ENCODE measurements at regions of chr2 and their contacts with region 1.

Region 1: DNA sequence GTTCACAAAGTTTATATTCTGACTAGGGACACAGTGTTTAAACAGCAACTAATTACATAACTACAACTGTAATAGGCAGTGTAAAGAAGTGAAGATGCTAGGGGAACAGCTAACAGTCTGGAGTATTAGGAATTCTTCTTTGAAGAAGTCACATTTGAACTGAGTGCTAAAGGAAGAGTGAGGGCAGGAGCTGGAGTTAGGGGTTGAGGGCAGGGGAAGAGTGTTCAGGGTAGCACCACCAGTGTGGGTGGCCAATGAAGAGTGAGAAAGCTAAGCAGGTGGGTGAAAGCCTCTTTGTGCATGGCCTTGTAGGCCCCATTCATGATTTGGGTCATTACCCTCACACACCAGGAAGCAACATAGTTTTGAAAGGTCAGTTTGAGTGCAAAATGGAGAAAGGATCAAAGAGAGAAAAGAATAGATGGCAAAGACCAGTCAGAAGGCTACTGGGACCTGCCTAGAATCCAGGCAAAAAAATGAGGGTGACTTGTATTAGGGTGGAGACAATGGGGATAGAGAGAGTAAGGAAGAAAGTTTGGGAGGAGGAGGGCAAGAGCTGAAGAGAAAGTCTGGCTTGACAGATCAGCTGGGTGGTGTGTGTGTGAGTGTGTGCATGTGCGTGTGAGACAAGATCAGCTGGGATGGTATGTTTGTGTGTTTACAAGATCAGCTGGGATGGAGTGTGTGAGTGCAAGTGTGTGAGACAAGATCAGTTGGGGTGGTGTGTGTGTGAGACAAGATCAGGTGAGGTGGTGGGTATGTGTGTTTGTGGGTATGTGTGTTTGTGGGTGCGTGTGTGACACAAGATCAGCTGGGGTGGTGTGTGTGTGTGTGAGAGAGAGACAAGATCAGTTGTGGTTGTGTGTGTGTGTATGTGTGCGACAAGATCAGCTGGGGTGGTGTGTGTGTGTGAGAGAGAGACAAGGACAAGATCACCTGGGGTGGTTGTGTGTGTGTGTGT is 43.6 kb upstream of the AGPS start:
- DNase-seq: no peak
- H3K4me3 ChIP-seq: no peak overlapping the region
- H3K27ac ChIP-seq: no peak overlapping the region
- H3K4me1 ChIP-seq: peaks cover 0 to 15% of the 10 kb centered on the region in 2 donors
- H3K27me3 ChIP-seq: no peaks in the 10 kb centered on the region
- CTCF ChIP-seq: no peak
- POLR2A ChIP-seq: no peak

Region 2: DNA sequence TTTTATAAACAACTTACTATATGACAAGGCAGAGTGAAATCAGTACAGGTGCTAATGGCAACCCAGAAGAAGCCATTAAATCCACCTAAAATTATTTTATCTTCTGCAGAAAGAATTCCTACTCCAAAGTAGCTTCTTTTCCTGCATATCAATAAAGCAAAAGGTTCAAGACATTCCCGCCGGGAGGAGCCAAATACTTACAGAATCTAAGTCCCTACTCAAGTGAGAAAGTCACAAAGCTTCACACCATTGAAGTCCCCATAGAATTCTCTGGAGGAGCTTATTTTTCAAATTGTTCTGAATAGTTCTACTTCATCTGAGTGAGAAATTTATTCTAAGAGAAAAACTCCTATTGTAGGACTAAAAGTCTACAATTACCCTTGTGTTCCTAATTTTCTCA is 370.1 kb before region 1 on chr2:
- intact Hi-C with region 1: no loop called
- DNase-seq: no peak
- H3K4me3 ChIP-seq: no peak overlapping the region
- H3K27ac ChIP-seq: no peak overlapping the region
- H3K4me1 ChIP-seq: no peaks in the 10 kb centered on the region
- H3K27me3 ChIP-seq: no peaks in the 10 kb centered on the region
- CTCF ChIP-seq: no peak
- POLR2A ChIP-seq: no peak

Region 3: DNA sequence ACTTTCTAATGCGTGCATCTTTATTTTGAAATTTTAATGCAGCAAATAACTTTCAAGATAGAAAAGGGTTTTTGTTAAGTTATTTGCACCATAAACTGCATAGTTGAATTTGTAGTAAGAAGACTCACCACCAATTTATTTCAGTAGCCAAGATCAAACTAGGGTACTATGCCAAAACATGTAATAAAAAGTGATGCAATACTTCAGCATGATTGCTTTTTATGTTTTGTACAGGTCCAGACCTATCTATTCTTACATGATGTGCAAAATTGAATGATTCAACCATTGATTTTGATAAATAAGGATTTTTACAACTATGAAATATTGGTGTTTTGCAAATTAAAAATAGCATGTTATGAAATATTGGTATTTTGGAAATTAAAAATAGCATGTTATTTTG is 70.3 kb after region 1 on chr2:
- intact Hi-C with region 1: loop called in 1 of 2 experiments (anchors 10 kb)
- DNase-seq: no peak
- H3K4me3 ChIP-seq: no peak overlapping the region
- H3K27ac ChIP-seq: no peak overlapping the region
- H3K4me1 ChIP-seq: peaks cover 9 to 35% of the 10 kb centered on the region in 2 donors
- H3K27me3 ChIP-seq: no peaks in the 10 kb centered on the region
- CTCF ChIP-seq: no peak
- POLR2A ChIP-seq: no peak

Region 4: DNA sequence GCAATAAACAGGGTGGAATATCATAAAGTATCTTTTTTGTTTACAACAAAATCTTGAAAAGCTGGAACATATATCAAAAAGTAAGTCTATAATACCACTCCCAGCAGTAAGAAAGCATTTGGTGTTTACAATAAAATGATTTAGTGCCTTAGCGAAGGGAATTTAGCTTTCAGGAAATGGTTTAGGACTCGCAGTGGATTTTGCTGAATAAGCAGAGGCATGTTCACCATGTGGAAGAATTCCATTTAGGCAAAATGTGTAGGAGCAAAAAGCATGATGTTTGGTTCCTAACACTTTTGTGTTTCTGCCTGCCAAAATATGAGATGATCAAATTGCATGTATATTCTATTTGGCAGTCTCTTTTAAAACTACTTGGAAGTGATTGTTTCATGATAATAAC is 207.1 kb after region 1 on chr2:
- intact Hi-C with region 1: no loop called
- DNase-seq: no peak
- H3K4me3 ChIP-seq: no peak overlapping the region
- H3K27ac ChIP-seq: no peak overlapping the region
- H3K4me1 ChIP-seq: peaks cover 0 to 8% of the 10 kb centered on the region in 2 donors
- H3K27me3 ChIP-seq: no peaks in the 10 kb centered on the region
- CTCF ChIP-seq: no peak
- POLR2A ChIP-seq: no peak

Region 5: GRCh38 chr2:177611310-177611886 is 262.4 kb after region 1 on chr2:
- intact Hi-C with region 1: loop called in 1 of 2 experiments (anchors 5 kb)
- DNase-seq: no peak
- H3K4me3 ChIP-seq: no peak overlapping the region
- H3K27ac ChIP-seq: no peak overlapping the region
- H3K4me1 ChIP-seq: no peaks in the 10 kb centered on the region
- H3K27me3 ChIP-seq: no peaks in the 10 kb centered on the region
- CTCF ChIP-seq: no peak
- POLR2A ChIP-seq: no peak